Activated B cell treated with CpG ODN at 0.5 μM for 24 hours (primary cell): ENCODE measurements at regions of chr6 and their contacts with region 1.

Region 1: GRCh38 chr6:53492860-53493634 is 51.9 kb downstream of the GCLC start:
- DNase-seq: no peak
- ATAC-seq: peak; percentile 14
- H3K4me3 Mint-ChIP-seq: no peak overlapping the region
- H3K27ac Mint-ChIP-seq: no peak overlapping the region
- H3K4me1 Mint-ChIP-seq: peaks cover 5% of the 10 kb centered on the region
- H3K27me3 Mint-ChIP-seq: no peaks in the 10 kb centered on the region
- CTCF ChIP-seq: peak; percentile 64

Region 2: DNA sequence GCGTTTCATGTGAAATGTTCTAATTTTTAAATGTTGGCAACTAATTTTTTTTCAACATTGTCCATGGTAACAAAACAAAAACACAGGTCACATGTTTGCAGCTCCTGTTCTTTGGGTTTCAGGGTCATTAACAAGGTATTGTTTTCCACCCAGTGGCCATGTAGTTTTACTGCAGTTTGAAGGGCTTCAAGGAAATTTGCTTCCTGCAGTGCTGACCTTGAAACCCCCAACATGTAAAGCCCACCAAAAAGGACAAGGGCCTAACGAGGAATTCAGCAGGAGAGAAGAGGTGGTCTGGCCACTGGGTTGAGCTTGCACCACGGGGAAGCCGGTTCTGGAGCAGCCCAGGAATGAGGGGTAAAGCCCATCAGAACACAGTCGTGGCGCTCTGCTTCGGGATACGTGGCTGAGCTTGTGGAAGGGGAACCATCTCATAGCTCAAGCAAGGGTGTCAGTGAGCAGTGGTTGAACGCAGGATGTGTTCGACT is 186.4 kb after region 1 on chr6:
- CTCF ChIA-PET with region 1: interaction called, 4 read pairs
- POLR2A ChIA-PET with region 1: no interaction called
- intact Hi-C with region 1: loop called (anchors 1 kb)
- DNase-seq: no peak
- ATAC-seq: no peak
- H3K4me3 Mint-ChIP-seq: no peak overlapping the region
- H3K27ac Mint-ChIP-seq: no peak overlapping the region
- H3K4me1 Mint-ChIP-seq: no peaks in the 10 kb centered on the region
- H3K27me3 Mint-ChIP-seq: peaks cover 2% of the 10 kb centered on the region
- CTCF ChIP-seq: no peak

Region 3: DNA sequence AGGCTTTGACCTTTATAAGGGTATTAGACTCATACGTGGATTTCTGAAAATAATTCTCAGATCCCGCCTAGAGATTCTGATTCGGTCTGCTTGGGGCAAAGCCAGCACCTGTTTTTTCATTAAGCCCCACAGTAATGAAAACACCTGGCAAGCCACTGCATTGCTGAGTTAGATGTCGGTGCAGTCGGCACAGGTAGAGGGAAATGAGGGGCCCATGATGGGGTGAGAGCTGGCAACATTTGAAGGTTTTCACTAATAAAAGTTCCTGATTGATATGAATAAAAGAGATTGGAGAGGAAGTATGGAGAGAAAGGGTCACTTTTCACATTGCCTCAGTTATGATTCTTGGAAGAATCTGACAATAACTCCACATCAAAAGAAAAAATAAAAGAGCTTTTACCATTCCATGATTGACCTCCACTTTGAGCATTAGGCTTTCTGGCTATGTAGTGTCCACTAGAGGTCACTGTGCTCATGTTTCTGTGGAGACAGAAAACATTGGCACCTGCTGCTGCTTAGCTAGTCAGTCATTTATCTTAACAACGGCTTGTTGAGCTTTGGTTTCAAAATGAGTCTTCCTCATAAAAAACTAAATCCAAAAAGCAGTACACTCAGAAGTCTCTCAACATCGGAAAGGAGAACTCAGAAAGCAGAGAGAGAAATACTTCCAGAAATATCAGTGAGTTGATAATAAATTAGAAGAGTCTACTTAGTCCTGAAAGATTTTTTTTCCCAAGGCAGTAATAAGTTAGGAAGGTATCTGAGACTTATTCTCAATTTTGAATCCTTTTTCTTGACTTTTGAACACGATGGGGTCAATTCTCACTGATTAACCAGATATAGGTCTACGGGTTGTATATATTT is 225.8 kb after region 1 on chr6:
- CTCF ChIA-PET with region 1: interaction called, 189 read pairs
- POLR2A ChIA-PET with region 1: no interaction called
- intact Hi-C with region 1: no loop called
- DNase-seq: no peak
- ATAC-seq: peak; percentile 81
- H3K4me3 Mint-ChIP-seq: no peak overlapping the region
- H3K27ac Mint-ChIP-seq: no peak overlapping the region
- H3K4me1 Mint-ChIP-seq: peaks cover 5% of the 10 kb centered on the region
- H3K27me3 Mint-ChIP-seq: peaks cover 13% of the 10 kb centered on the region
- CTCF ChIP-seq: peak; percentile 59